Activated naive CD4-positive, alpha-beta T cell treated with anti-CD3 and anti-CD28 coated beads for 36 hours (primary cell): ENCODE measurements at regions of chr19 and their contacts with region 1.

Region 1: GRCh38 chr19:14059093-14059480 is 2.8 kb downstream of the PALM3 start:
- DNase-seq: peak; percentile 53
- H3K4me3 Mint-ChIP-seq: no peak overlapping the region
- H3K27ac Mint-ChIP-seq: no peak overlapping the region
- H3K4me1 Mint-ChIP-seq: peaks cover 17% of the 10 kb centered on the region
- H3K27me3 Mint-ChIP-seq: peaks cover 37% of the 10 kb centered on the region

Region 2: DNA sequence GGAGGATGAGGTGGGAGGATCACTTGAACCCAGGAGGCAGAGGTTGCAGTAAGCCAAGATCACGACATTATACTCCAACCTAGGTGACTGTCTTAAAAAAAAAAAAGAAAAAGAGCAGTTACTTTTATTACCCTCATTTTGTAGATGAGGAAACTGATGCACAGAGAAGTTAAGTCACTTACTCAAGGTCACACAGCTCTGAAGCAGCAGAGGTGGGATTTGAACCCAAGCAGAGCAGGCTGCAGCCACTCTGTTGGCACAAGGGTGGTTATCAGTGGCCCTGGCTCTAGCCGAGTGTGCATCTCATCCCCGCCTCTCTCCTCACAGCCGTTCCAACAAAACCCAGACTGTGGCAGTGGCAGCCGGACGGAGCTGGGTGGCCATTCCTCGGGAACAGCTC is 19.9 kb before region 1 on chr19:
- CTCF ChIA-PET with region 1: interaction called, 15 read pairs
- intact Hi-C with region 1: no loop called
- DNase-seq: no peak
- H3K4me3 Mint-ChIP-seq: no peak overlapping the region
- H3K27ac Mint-ChIP-seq: no peak overlapping the region
- H3K4me1 Mint-ChIP-seq: peaks cover 16% of the 10 kb centered on the region
- H3K27me3 Mint-ChIP-seq: no peaks in the 10 kb centered on the region

Region 3: DNA sequence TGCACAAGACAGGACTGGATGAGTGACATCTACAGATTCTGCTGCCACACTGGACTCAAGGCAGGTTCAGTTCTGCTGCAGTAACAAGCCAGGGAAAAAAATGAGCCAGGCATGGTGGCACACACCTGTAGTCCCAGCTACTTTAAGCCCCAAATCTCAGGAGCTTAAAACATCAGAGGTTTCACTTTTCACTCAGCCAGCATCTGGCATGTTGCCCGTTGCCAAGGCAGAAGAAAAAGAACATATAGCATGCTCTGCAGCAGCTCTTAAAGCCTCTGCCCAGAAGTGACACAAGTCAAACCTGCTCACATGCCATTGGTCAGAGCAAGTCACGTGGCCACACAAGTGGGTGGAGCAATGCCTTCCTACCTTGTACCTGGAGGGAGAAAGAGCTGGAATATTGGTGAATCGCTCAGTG is 307.4 kb after region 1 on chr19:
- CTCF ChIA-PET with region 1: no interaction called
- intact Hi-C with region 1: no loop called
- DNase-seq: peak; percentile 99
- H3K4me3 Mint-ChIP-seq: peak overlapping the region; percentile 75
- H3K27ac Mint-ChIP-seq: peak overlapping the region; percentile 100
- H3K4me1 Mint-ChIP-seq: peaks cover 78% of the 10 kb centered on the region
- H3K27me3 Mint-ChIP-seq: no peaks in the 10 kb centered on the region